SK-MEL-5 (cell line): ENCODE measurements at regions of chr7 and their contacts with region 1.

Region 1: GRCh38 chr7:7424151-7424873 is 111.4 kb downstream of the COL28A1 start:
- DNase-seq: peak; percentile 91

Region 2: DNA sequence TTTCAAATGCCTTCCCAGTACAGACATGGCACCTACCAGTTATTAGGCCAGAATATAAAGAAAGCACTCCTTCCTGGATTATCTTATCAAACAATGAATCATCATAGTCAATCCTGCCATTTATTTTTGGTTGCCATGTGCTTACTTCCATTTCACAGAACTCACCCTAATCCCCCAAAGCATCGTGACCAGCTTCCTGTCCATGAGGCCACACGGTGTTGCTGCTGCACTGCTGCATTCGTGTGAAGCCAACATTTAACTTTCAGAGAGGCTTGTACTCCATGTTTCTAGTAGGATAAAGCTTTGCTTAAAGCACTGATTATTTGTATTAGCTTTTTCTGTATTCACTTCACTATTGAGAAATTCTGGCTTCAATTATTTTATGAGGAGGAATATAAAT is 96.9 kb after region 1 on chr7:
- in situ Hi-C with region 1: loop called (anchors 25 kb)
- DNase-seq: peak; percentile 41